ENCODE measurements at regions of chr5 and their contacts with region 1.

Region 1: GRCh38 chr5:58460732-58461286 is 923 bp upstream of the PLK2 start:
- DNase-seq: peak; percentile 90 to 93
- H3K4me3 ChIP-seq: peak overlapping the region; percentile 57 to 85
- H3K27ac ChIP-seq: peak overlapping the region; percentile 85 to 91
- H3K4me1 ChIP-seq: peaks cover 0 to 34% (median 9%) of the 10 kb centered on the region in 4 donors
- H3K27me3 ChIP-seq: no peaks in the 10 kb centered on the region
- CTCF ChIP-seq: peak; percentile 77 to 79

Region 2: DNA sequence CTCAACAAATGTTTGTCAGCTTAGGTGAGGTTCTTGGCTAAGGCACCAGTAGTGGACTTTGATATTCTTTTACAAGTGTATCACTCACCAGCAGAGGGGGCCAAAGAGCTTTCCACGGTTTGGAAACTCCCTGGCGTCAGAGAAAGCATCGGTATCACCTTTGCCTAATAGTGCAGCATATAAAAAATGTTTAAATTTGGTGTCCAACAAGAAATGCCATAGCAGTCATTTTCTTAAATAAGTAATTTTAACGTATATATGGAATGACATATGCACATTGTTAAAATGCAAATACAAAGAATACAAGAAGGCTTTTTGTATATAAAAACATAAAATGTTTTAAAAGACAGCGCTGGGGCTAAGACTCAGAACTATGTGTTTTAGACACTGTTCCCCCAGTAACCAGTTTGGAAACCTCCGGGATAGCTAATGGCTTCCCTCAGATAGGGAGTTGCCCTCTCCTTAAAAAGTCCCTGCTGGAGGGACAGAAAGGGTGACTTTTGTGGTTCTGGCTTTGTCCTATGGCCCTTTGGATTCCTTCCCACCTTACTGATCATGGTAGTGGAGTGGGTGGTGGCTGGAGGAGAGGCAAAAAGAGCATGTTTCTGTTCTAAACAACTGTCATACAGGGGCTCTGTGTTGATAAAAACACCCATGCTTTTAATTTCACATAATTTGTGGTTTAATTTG is 1162.4 kb before region 1 on chr5:
- intact Hi-C with region 1: loop called (anchors 2 kb)
- DNase-seq: peak; percentile 75 to 83
- H3K4me3 ChIP-seq: no peak overlapping the region
- H3K27ac ChIP-seq: peak overlapping the region in 1 of 2 donors; percentile 21
- H3K4me1 ChIP-seq: peaks cover 0 to 10% (median 6%) of the 10 kb centered on the region in 4 donors
- H3K27me3 ChIP-seq: no peaks in the 10 kb centered on the region
- CTCF ChIP-seq: peak; percentile 80 to 87

Region 3: GRCh38 chr5:57779383-57780223 is 681.2 kb before region 1 on chr5:
- intact Hi-C with region 1: loop called (anchors 2 kb)
- DNase-seq: no peak
- H3K4me3 ChIP-seq: peak overlapping the region in 1 of 2 donors; percentile 9
- H3K27ac ChIP-seq: peak overlapping the region in 1 of 2 donors; percentile 53
- H3K4me1 ChIP-seq: peaks cover 0 to 33% (median 9%) of the 10 kb centered on the region in 4 donors
- H3K27me3 ChIP-seq: no peaks in the 10 kb centered on the region
- CTCF ChIP-seq: peak; percentile 58 to 70

Region 4: GRCh38 chr5:57887851-57888621 is 572.8 kb before region 1 on chr5:
- intact Hi-C with region 1: loop called (anchors 5 kb)
- DNase-seq: no peak
- H3K4me3 ChIP-seq: no peak overlapping the region
- H3K27ac ChIP-seq: no peak overlapping the region
- H3K4me1 ChIP-seq: peaks cover 0 to 17% (median 0%) of the 10 kb centered on the region in 4 donors
- H3K27me3 ChIP-seq: no peaks in the 10 kb centered on the region
- CTCF ChIP-seq: peak; percentile 46 to 53

Region 5: DNA sequence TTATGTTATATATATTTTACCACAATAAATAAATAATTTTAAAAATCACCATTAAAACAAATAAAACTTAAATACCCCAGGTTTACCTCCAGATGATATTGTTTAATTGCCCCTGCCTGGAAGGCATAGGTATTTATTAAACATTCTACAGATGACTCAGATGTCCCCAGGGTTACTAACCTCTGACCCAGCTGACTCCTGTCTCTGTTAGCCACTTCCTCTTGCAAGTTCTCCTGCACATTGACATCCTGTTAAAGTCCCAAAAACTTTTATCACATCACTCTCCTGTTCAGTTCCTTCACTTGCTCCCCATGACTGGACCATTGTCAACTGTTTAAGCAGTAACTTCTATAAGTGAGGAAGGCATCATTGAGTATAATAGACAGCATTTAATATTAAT is 85.1 kb after region 1 on chr5:
- intact Hi-C with region 1: no loop called
- DNase-seq: no peak
- H3K4me3 ChIP-seq: no peak overlapping the region
- H3K27ac ChIP-seq: no peak overlapping the region
- H3K4me1 ChIP-seq: no peaks in the 10 kb centered on the region
- H3K27me3 ChIP-seq: no peaks in the 10 kb centered on the region
- CTCF ChIP-seq: no peak